AG04450 (cell line): ENCODE measurements at regions of chr3 and their contacts with region 1.

Region 1: GRCh38 chr3:65439641-65440284 is 599.0 kb downstream of the MAGI1 start:
- DNase-seq: peak; percentile 49
- H3K4me3 ChIP-seq: no peak overlapping the region
- H3K27ac ChIP-seq: no peak overlapping the region
- H3K27me3 ChIP-seq: no peaks in the 10 kb centered on the region
- CTCF ChIP-seq: peak; percentile 81

Region 2: GRCh38 chr3:64988188-64988587 is 451.6 kb before region 1 on chr3:
- CTCF ChIA-PET with region 1: no interaction called
- POLR2A ChIA-PET with region 1: no interaction called
- DNase-seq: no peak
- H3K4me3 ChIP-seq: no peak overlapping the region
- H3K27ac ChIP-seq: no peak overlapping the region
- H3K27me3 ChIP-seq: no peaks in the 10 kb centered on the region
- CTCF ChIP-seq: no peak

Region 3: DNA sequence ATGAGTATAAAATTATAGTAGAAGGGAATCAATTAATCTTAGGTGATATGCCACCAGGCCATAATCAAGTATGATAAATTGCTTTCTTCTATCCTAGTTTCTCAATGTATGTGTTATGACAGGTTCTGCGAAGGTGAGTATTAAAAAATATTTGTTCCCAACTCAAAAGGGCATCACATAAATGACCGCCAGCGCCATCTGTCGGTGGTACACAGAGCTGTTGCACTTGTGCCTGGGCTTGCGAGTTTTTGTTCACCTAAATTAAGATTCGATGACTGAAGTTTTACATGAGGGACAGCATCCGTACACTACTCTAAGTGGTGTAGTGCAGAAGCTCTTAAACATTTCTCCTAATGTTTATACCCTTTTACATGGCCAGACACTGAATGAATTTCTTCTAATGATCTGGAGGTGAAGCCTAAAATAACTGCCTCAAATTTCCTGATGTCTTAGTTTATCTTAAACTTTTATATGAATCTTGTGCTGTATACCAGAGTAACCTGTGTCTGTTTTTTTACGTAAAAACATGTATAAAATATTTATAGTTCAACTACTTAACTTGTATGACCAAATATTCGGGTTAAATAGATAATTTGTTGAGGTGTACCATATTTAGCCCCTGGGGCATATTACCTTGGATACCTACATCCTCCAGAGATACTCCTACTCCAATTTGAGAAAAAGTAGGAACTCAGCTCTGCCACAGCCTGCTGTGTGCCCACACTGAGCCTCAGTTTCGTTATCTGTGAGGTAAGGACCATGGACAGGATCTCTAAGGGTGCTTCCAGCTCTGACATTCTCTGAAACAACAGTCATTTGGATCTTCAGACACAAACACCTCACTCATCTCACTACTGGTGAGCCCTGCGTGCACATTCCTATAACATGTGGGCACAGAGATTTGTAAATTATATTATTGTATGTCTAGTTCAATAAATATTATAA is 233.4 kb after region 1 on chr3:
- CTCF ChIA-PET with region 1: interaction called, 74 read pairs
- POLR2A ChIA-PET with region 1: no interaction called
- DNase-seq: peak; percentile 1
- H3K4me3 ChIP-seq: no peak overlapping the region
- H3K27ac ChIP-seq: no peak overlapping the region
- H3K27me3 ChIP-seq: no peaks in the 10 kb centered on the region
- CTCF ChIP-seq: peak; percentile 75

Region 4: GRCh38 chr3:65732051-65732935 is 292.5 kb after region 1 on chr3:
- CTCF ChIA-PET with region 1: interaction called, 54 read pairs
- POLR2A ChIA-PET with region 1: interaction called, 3 read pairs
- DNase-seq: peak; percentile 41
- H3K4me3 ChIP-seq: no peak overlapping the region
- H3K27ac ChIP-seq: no peak overlapping the region
- H3K27me3 ChIP-seq: no peaks in the 10 kb centered on the region
- CTCF ChIP-seq: peak; percentile 91

Region 5: GRCh38 chr3:65751123-65751700 is 311.4 kb after region 1 on chr3:
- CTCF ChIA-PET with region 1: interaction called, 111 read pairs
- POLR2A ChIA-PET with region 1: no interaction called
- DNase-seq: no peak
- H3K4me3 ChIP-seq: no peak overlapping the region
- H3K27ac ChIP-seq: no peak overlapping the region
- H3K27me3 ChIP-seq: no peaks in the 10 kb centered on the region
- CTCF ChIP-seq: peak; percentile 78

Region 6: DNA sequence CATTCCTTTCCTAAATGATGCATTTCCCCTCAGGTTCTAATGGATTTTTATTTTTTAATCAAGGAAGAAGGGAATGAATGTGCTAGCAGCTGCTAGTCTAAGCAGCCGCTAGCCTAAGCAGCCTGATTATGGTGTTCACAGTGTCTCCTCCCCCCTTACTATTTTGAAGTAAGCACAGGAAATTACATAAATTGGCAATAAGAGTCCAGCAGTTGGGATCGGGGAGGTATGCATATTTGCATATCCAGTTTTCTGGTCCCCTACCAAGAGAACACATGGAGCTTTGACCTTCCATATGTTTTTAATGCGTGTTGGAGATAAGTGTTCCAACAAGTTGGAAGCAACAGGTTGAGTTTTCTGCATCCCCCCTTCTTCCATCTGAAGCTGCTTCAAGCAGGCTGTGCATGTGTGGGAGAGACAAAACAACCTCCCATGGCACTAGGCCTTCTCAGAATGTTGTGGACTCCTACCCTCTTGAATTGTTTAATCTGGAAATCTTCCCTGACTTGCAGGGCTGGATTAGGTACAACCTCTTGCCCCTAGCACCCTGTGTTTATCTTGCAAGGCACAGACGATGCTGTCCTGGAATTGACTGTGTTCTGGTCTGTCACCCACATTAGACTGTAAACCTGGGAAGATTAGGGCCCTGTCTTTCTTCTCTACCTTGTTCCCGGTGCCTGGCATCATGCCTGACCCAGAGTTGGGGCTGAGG is 1185.9 kb after region 1 on chr3:
- CTCF ChIA-PET with region 1: no interaction called
- POLR2A ChIA-PET with region 1: no interaction called
- DNase-seq: no peak
- H3K4me3 ChIP-seq: no peak overlapping the region
- H3K27ac ChIP-seq: no peak overlapping the region
- H3K27me3 ChIP-seq: no peaks in the 10 kb centered on the region
- CTCF ChIP-seq: no peak